BJ (cell line): ENCODE measurements at regions of chr4 and their contacts with region 1.

Region 1: GRCh38 chr4:54315561-54316538 is 86.8 kb downstream of the PDGFRA start:
- DNase-seq: no peak
- H3K4me3 ChIP-seq: no peak overlapping the region
- H3K27me3 ChIP-seq: no peaks in the 10 kb centered on the region
- CTCF ChIP-seq: no peak

Region 2: GRCh38 chr4:54961357-54961975 is 645.6 kb after region 1 on chr4:
- CTCF ChIA-PET with region 1: interaction called, 24 read pairs
- POLR2A ChIA-PET with region 1: no interaction called
- DNase-seq: no peak
- H3K4me3 ChIP-seq: no peak overlapping the region
- H3K27me3 ChIP-seq: no peaks in the 10 kb centered on the region; the same call in none of the 2 replicates
- CTCF ChIP-seq: peak; percentile 68